Common myeloid progenitor, CD34-positive (primary cell): ENCODE measurements at regions of chr6 and their contacts with region 1.

Region 1: DNA sequence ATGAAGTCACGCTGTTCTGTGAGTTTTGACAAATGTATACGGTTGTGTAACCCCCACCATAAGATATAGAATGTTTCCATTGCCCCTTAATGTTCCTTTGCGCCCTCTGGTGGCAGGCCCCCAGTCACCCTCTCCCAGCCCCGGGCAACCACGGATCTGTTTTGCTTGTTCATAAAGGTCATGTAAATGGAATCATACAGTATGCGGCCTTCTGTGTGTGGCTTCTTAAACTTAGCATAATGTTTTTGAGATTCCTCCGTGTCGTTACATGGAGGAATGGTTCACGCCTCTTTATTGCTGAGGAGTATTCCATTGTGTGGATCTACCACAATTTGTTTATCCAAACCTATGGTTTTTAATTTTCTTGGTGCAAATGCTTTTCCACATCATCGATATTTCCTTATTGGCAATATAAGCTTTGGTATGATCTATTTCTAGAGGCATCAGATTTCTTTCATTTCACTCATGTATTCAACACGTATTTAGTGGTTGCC is 28.4 kb downstream of the LYRM2 start:
- DNase-seq: peak; percentile 65 to 82 (median 76)
- H3K4me3 ChIP-seq: no peak overlapping the region
- H3K27ac ChIP-seq: no peak overlapping the region
- H3K4me1 ChIP-seq: peaks cover 0 to 10% (median 0%) of the 10 kb centered on the region in 4 experiments
- H3K27me3 ChIP-seq: no peaks in the 10 kb centered on the region

Region 2: DNA sequence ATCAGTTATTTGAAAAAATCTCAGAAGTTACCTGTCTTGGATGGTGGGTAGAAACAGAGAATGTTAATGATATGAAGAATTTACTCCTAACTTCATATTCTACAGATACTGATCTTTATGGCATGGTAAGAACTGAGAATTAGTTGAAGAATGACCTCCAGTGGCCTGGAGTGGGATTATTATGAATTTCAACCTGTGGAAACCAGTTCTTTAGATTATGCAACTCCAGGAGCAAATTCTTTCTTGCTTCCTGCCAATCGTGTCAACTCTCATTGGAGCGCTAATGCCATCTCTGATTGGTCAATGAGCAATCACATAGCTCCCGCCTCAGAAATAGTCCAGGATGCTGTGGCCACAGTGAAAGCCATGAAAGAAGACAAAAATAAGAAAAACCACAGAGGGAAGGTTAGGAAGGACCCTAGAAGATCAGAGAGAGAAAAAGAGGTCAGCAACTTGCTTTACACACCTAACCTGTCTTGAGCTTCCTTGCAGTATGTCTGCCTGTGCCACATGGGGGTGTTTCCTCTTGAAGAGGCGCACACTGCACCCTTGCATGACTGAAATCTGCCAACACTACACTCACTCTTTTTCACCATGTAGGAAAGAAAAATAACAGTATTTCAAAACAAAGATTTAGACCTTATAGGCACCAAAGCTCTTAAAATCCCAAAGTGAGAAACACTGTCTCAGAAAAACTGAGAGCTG is 12.1 kb before region 1 on chr6:
- CTCF ChIA-PET with region 1: interaction called, 23 read pairs
- POLR2A ChIA-PET with region 1: interaction called, 3 read pairs
- DNase-seq: peak; percentile 63 to 80 (median 80)
- H3K4me3 ChIP-seq: no peak overlapping the region
- H3K27ac ChIP-seq: no peak overlapping the region
- H3K4me1 ChIP-seq: peaks cover 0 to 7% (median 2%) of the 10 kb centered on the region in 4 experiments
- H3K27me3 ChIP-seq: no peaks in the 10 kb centered on the region